ENCODE measurements at regions of chr1 and their contacts with region 1.

Region 1: DNA sequence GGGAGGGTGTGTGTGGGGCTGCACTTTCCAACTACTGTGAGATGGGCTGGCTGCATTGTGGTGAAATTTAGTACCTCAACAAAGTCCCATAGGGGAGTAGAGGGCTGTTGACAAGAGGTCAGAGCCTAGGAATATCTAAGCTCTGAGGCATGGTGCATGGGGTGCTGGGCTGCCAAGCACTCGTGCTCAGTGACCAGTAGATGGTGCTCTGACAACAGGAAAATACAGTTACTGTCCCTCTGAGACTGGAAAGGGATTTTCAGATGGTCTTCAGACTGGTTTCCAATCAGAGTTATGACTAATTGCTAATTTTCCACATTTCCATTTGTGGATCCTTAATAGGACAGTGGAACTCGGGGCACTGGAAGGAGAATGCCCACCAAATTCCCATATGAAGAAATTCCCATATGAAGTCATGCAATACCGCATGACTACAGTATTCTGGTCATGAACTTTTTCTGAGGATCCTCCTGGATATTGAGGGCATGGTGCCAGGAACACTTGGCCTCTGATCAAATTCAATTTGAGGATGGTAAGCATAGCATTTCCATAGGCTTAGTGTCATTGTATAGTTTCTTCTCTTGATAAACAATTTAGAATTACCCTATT is 4.1 kb upstream of the CACNA1E start:
- DNase-seq: peak in 1 of 2 donors; percentile 31
- ATAC-seq: peak; percentile 81

Region 2: GRCh38 chr1:181676269-181676668 is 197.0 kb after region 1 on chr1:
- intact Hi-C with region 1: loop called in 1 of 2 experiments (anchors 5 kb)
- DNase-seq: peak in 1 of 2 donors; percentile 44
- ATAC-seq: peak; percentile 91

Region 3: DNA sequence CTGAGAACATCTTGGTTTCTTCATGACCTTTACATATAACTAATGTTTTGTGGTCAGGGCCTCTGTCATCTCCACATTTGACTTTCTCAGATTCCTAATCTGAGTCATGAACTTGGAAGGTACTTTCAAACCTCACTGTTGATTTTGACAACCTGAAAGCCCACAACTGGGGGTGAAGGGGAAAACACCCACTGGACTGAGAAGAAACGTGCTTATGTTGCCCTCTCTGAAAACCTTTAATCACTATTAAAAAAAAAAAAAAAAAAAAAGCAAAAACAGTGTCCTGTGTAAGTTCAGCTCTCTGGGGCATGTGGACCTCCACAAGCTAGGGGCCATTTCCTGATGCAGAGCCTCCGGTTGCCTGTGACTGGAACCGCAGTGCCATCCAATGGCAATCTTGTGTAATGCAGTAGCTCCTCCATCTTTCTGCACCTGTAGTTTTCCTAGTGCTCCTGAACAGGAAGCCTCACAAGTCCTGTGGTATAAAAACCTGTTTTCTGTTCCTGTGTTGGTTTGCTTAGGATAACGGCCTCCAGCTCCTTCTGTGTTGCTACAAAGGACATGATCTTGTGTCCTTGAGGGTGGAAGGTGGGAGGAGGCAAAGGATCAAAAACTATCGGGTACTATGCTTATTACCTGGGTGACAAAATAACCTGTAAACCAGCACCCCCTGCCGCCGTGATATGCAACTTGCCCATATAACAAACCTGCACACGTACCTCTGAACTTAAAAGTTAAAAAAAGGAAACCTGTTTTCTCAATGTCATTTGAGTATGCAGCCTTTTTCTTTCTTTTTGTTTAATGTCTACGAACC is 457.7 kb after region 1 on chr1:
- intact Hi-C with region 1: loop called in 1 of 2 experiments (anchors 5 kb)
- DNase-seq: peak in 1 of 2 donors; percentile 53
- ATAC-seq: peak; percentile 92